Colonic mucosa (tissue), 4 donors: ENCODE measurements at regions of chr2 and their contacts with region 1.

Region 1: DNA sequence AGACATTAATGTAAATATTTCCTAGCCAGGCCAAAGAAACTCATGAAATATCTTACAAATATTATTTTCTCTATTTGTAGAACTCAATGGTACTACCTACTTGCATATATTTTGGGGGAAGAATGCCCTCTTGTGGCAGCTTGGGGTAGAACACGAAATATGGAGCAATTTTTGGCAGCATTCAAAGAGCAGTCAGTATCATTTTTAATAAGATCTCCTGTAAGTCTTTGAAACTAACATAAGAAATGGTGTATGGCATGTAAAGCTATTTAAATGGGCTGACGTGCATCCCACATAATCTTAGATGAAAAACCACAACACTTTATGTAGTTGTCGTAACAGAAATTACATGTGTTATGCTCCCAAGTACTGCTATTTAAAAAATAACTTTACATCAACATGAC is 62.3 kb upstream of the CCDC195 start:
- DNase-seq: peak; percentile 74
- H3K4me3 ChIP-seq: no peak overlapping the region
- H3K27ac ChIP-seq: no peak overlapping the region
- H3K4me1 ChIP-seq: peaks cover 6% of the 10 kb centered on the region
- H3K27me3 ChIP-seq: no peaks in the 10 kb centered on the region
- CTCF ChIP-seq: peak; percentile 73

Region 2: DNA sequence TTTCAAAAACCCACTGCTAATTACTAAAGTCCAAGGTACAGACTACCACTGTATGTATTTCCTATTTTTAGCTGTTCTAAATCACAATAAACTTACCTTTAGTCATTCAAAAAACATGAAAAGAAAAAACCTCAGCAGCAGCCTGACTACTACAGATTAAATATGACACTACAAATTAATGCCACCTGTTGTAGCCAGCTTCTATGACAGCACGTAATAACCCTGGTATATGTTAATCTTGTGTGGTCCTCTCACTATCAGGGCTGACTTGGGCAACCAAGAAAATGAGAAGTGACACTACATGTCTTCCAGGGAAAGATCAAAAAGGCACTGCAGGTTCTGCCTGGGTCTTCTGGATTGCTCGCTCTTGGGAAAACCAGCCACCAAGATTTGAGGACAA is 285.9 kb before region 1 on chr2:
- intact Hi-C with region 1: no loop called
- DNase-seq: no peak
- H3K4me3 ChIP-seq: no peak overlapping the region
- H3K27ac ChIP-seq: no peak overlapping the region
- H3K4me1 ChIP-seq: no peaks in the 10 kb centered on the region
- H3K27me3 ChIP-seq: no peaks in the 10 kb centered on the region
- CTCF ChIP-seq: no peak

Region 3: DNA sequence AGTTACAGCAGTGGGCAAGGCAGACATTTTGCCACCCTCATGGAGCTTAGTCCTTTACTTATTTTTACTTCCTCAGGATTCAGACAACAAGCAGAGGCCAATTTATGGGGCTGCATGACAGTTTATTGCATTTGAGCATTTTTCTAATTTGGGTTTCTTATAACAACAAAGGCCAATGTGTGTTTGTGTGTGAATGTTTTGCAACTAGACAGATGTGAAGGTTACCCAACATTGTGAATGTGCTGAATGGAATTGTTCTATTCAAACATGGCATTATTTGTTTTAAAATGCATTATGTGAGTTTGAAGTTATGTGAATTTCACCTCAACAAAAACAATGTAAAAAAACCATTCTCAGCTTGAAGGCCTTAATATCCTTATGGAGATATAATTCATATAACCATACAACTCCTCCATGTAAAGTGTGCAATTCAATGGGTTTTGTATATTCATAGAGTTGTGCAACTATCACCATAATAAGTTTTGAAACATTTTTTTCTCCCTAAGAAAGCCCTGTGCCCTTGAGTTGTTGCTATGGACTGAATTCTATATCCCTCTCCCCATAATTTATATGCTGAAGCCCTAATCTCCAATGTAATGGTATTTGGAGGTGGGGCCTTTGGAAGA is 119.6 kb before region 1 on chr2:
- intact Hi-C with region 1: loop called (anchors 5 kb)
- DNase-seq: no peak
- H3K4me3 ChIP-seq: no peak overlapping the region
- H3K27ac ChIP-seq: no peak overlapping the region
- H3K4me1 ChIP-seq: no peaks in the 10 kb centered on the region
- H3K27me3 ChIP-seq: no peaks in the 10 kb centered on the region
- CTCF ChIP-seq: no peak

Region 4: GRCh38 chr2:224819075-224819474 is 40.6 kb after region 1 on chr2:
- intact Hi-C with region 1: no loop called
- DNase-seq: no peak
- H3K4me3 ChIP-seq: no peak overlapping the region
- H3K27ac ChIP-seq: no peak overlapping the region
- H3K4me1 ChIP-seq: no peaks in the 10 kb centered on the region
- H3K27me3 ChIP-seq: no peaks in the 10 kb centered on the region
- CTCF ChIP-seq: no peak

Region 5: DNA sequence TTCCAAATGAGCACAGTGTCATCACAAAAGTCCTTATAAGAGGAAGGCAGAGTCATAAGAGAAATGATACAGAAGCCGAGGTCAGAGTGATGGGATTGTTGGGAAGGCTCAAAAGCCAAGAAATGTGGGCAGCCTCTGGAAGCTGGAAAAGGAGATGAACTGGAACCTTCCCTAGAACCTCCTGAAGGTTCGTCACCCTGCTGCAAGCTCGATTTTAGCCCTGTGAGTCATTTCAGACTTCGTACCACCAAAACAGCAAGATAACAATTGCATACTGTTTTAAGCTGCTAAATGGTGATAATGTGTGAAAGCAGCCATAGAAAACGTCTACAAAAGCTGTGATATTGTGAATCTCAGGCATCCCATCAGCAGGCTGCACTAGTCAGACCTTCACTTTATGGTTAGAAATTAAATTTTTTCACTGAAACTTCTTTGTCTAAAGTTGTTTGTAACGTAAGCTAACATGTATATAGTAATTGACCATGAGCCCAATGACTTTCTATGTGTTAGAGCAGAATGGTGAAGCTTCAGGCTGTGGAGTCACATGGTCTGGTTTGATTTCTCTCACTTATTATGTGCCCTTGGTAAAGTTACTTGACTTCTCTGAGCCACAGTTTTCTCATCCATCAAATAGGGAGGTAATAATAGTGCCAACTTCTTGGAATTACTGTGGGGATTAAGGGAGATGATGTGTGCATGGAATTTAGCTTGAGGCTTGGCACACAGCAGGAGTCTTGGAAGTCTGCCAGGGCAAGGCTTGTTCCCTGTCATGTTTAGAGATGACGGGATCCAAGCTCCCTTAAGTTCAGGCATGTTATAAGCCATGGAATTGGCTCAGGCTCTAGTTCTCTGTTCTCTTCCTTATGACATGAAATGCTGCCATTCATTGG is 69.7 kb after region 1 on chr2:
- intact Hi-C with region 1: no loop called
- DNase-seq: no peak
- H3K4me3 ChIP-seq: no peak overlapping the region
- H3K27ac ChIP-seq: no peak overlapping the region
- H3K4me1 ChIP-seq: no peaks in the 10 kb centered on the region
- H3K27me3 ChIP-seq: no peaks in the 10 kb centered on the region
- CTCF ChIP-seq: no peak